H1 (cell line): ENCODE measurements at regions of chr2 and their contacts with region 1.

Region 1: GRCh38 chr2:157628477-157629415 is at the start of gene ACVR1C:
- DNase-seq: peak; percentile 82 to 91
- H3K4me3 ChIP-seq: peak within 1 kb of the TSS; percentile 49 to 78 (median 56)
- H3K27ac ChIP-seq: no peak within 1 kb of the TSS
- H3K4me1 ChIP-seq: no peaks in the 10 kb centered on the region; a peak in 1 of 7 replicates
- H3K27me3 ChIP-seq: peaks cover 8 to 34% (median 23%) of the 10 kb centered on the region in 4 experiments
- CTCF ChIP-seq: peak; percentile 73 to 93 (median 75)
- EP300 ChIP-seq: no peak
- POLR2A ChIP-seq: no peak
- RAD21 ChIP-seq: peak; percentile 60 to 66
- total RNA-seq, gene ACVR1C: 0.40 and 0.52 TPM in 2 replicates

Region 2: GRCh38 chr2:157492189-157492773 is 136.5 kb before region 1 on chr2:
- CTCF ChIA-PET with region 1: interaction called, 15 read pairs
- POLR2A ChIA-PET with region 1: no interaction called
- DNase-seq: peak; percentile 23 to 71
- H3K4me3 ChIP-seq: no peak overlapping the region
- H3K27ac ChIP-seq: no peak overlapping the region
- H3K4me1 ChIP-seq: no peaks in the 10 kb centered on the region
- H3K27me3 ChIP-seq: no peaks in the 10 kb centered on the region
- CTCF ChIP-seq: peak; percentile 71 to 90 (median 86)
- EP300 ChIP-seq: no peak
- POLR2A ChIP-seq: no peak
- RAD21 ChIP-seq: peak; percentile 96 to 98

Region 3: GRCh38 chr2:157497638-157498314 is 131.0 kb before region 1 on chr2:
- CTCF ChIA-PET with region 1: interaction called, 15 read pairs
- POLR2A ChIA-PET with region 1: no interaction called
- DNase-seq: no peak
- H3K4me3 ChIP-seq: no peak overlapping the region
- H3K27ac ChIP-seq: no peak overlapping the region
- H3K4me1 ChIP-seq: no peaks in the 10 kb centered on the region
- H3K27me3 ChIP-seq: no peaks in the 10 kb centered on the region
- CTCF ChIP-seq: peak in 2 of 3 experiments; percentile 75 to 87; a peak in 3 of 4 replicates
- EP300 ChIP-seq: no peak
- POLR2A ChIP-seq: no peak
- RAD21 ChIP-seq: peak; percentile 91 to 93

Region 4: DNA sequence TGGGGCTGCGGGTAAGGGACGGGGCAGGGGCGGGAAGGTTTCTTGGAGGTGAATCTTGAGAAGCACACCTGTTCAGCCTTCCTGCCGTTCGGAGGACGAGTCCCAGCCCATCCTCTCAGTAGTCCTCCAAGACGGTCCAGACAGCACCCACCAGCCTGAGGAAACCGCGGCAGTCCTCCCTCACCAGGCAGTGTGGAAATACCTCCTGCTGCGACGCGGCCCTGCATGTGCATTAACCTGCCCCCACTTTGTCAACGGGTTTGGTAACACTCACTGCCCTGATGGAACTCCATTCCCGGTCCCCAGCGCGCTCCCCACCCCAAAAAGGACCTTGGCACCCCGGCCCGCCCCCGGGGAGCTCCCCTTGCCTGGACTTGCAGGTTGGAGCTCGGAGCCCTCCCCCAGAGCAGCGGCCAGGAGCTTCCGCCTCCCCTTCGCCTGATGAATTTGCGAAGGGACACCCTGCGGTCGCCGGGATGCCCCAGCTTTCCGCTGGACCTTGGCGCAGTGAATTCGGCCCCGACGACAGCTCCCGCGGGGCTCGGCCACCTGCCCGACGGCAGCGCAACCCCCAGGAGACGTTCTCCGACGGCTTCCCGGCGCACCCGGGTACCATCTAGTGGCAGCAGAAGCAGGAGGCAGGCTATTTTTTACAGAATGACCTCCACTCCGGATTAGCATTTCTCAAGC is 31.6 kb before region 1 on chr2:
- CTCF ChIA-PET with region 1: interaction called, 12 read pairs
- POLR2A ChIA-PET with region 1: interaction called, 3 read pairs
- DNase-seq: peak; percentile 21 to 83
- H3K4me3 ChIP-seq: peak overlapping the region; percentile 4 to 50 (median 24); a peak in 6 of 8 replicates
- H3K27ac ChIP-seq: no peak overlapping the region
- H3K4me1 ChIP-seq: no peaks in the 10 kb centered on the region
- H3K27me3 ChIP-seq: peaks cover 0 to 5% (median 3%) of the 10 kb centered on the region in 4 experiments; a peak in 2 of 7 replicates
- CTCF ChIP-seq: peak; percentile 73 to 82 (median 74)
- EP300 ChIP-seq: no peak
- POLR2A ChIP-seq: no peak
- RAD21 ChIP-seq: peak; percentile 71 to 80

Region 5: DNA sequence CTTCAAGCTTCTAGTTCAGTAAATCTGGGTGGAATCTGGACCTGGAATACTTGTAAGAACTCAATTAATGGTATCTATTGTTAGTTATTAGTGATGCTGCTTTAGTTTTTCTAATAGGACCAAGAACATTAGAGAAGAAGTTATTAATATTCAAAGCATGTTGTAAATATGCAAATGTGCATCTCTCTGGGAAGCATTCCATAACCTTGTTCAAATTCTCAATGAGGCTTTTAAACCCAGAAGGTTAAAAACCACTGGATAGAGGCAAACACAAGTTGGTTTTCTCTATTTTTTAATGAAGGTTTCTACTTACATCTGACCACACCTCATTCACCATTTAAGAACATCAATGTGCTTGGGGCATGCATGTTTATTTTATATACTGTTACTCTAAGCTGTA is 16.0 kb after region 1 on chr2:
- CTCF ChIA-PET with region 1: interaction called, 21 read pairs
- POLR2A ChIA-PET with region 1: no interaction called
- DNase-seq: no peak
- H3K4me3 ChIP-seq: no peak overlapping the region
- H3K27ac ChIP-seq: no peak overlapping the region
- H3K4me1 ChIP-seq: no peaks in the 10 kb centered on the region
- H3K27me3 ChIP-seq: no peaks in the 10 kb centered on the region
- CTCF ChIP-seq: no peak
- EP300 ChIP-seq: no peak
- POLR2A ChIP-seq: no peak
- RAD21 ChIP-seq: no peak

Region 6: DNA sequence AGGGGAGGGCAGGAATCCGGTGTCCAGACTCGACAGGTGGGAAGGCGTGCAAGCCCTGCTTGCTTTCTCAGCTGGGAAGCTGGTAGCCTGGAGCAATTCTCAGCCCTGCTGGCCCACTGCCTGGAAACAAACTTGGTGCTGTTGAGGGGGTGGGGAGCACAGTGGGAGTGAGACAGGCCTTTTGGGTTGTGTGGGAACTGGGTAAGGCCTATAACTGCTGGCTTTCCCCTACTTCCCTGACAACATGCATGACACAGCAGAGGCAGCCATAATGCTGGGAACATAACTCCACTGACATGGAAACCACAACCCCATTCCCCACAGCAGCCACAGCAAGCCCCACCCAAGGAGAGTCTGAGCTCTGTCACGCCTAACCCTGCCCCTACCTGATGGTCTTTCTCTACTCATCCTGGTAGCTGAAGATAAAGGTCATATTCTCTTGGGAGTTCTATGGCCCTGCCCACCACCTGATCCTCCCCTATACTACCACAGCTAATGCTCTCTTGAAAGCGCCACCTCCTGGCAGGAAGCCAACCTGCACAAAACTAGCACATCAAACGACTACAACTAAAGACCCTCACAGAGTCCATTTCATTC is 122.8 kb after region 1 on chr2:
- CTCF ChIA-PET with region 1: interaction called, 17 read pairs
- POLR2A ChIA-PET with region 1: no interaction called
- DNase-seq: peak in 1 of 2 experiments; percentile 76
- H3K4me3 ChIP-seq: no peak overlapping the region
- H3K27ac ChIP-seq: no peak overlapping the region
- H3K4me1 ChIP-seq: no peaks in the 10 kb centered on the region; a peak in 2 of 7 replicates
- H3K27me3 ChIP-seq: no peaks in the 10 kb centered on the region
- CTCF ChIP-seq: peak; percentile 42 to 68 (median 56)
- EP300 ChIP-seq: no peak
- POLR2A ChIP-seq: no peak
- RAD21 ChIP-seq: peak; percentile 43 to 59; a peak in 3 of 4 replicates